ENCODE measurements at regions of chr1 and their contacts with region 1.

Region 1: DNA sequence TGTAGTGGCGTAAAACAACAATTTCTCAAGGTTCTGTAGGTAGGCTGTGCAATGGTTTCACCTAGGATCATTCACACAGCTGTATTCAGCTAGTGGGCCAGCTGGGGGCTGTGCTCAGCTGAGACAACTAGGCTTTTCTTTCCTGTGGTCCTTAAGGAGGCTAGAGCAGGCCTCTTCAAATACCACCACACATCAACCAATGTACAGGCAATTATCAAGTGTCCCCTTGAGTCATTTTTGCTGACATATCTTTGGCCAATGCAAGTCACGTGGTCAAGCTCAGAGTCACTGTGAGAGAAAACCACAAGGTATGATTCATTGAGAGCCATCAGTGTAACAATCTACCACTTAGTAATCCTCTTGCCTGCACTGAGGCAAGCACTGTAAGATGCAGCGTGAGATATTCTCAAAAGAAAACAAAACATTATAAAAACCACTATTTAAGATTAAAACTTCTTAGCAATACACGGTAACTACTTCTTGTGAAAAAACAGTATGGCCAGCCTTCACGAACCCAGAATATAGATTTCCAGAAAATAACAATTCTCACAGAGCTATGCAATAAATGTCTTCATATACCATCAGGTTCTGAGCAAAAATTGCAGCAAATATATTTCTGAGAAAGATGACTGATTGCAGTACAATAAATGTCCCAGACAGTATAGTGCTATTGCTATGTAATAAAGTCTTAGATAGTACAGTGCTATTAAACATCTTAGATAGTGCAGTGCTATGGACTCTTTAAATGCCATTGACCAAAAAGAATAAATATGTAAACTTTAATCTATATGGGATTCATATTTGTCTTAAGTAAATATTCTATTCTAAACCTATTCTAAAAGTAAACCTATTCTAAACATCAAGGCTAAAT is 55.3 kb downstream of the NME7 start:
- ATAC-seq: peak in 7 of 8 experiments; percentile 39 to 98 (median 85)
- H3K4me3 ChIP-seq: no peak overlapping the region
- H3K27ac ChIP-seq: no peak overlapping the region
- H3K4me1 ChIP-seq: peaks cover 4 to 12% of the 10 kb centered on the region in 2 donors

Region 2: GRCh38 chr1:168803806-168804510 is 508.4 kb before region 1 on chr1:
- in situ Hi-C with region 1: no loop called
- ATAC-seq: peak in 5 of 8 experiments; percentile 73 to 85 (median 83)
- H3K4me3 ChIP-seq: no peak overlapping the region
- H3K27ac ChIP-seq: no peak overlapping the region
- H3K4me1 ChIP-seq: peaks cover 9 to 11% of the 10 kb centered on the region in 2 donors

Region 3: DNA sequence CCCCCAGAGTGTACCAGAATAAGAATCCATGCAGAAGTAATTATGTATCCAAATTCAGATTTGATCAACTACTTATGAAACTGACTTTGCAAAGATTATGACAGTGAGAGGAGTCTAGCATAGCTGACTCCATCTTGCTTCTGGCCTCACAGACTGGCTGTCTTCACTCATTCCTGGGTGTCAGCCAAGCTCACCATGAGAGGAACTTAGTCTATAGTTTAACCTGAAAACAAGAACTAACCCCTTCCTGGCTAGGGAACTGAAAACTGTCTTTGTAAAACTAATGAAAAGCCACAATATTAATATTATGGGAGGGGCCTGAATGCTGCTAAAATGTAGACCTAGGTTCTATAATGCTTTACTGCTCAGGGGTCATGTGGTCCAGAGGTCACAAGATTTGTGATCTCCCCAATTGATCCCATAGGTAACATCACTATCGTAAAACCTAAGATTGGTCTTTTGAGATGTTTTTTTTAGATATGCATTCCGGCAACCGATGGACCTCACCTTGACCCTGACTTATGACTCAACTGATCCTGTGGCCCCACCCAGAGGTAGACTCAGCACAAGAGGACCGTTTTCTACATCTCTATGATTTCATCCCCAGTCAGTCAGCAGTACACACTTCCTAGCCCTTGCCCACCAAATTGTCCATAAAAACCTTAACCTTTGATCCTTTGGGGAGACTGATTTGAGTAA is 150.7 kb before region 1 on chr1:
- in situ Hi-C with region 1: no loop called
- ATAC-seq: no peak
- H3K4me3 ChIP-seq: no peak overlapping the region
- H3K27ac ChIP-seq: no peak overlapping the region
- H3K4me1 ChIP-seq: peaks cover 0 to 2% of the 10 kb centered on the region in 2 donors

Region 4: DNA sequence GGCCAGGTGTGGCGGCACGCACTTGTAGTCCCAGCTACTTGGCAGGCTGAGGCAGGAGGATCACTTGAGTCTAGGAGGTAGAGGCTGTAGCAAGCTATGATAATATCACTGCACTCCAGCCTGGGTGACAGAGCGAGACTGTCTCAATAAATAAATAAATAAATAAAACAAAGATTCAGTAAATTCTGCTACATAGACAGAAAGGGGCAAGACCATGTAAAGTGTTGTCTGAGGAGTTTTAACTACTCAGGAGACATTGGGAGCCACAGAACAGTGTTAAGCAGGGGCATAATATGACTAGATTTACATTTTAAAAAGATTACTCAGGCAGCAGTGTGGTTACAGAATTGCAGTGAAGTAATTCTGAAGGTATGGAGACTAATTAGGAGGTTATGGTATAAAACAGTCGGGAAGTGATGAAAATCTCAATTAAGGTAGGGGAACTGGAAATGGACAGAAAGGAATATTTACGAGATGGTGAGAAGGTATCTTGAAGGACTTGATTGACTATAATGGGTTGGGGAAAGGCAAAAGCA is 111.2 kb before region 1 on chr1:
- in situ Hi-C with region 1: loop called in 1 of 9 experiments (anchors 25 kb)
- ATAC-seq: no peak
- H3K4me3 ChIP-seq: no peak overlapping the region
- H3K27ac ChIP-seq: no peak overlapping the region
- H3K4me1 ChIP-seq: peaks cover 6 to 46% of the 10 kb centered on the region in 2 donors

Measured in motor neuron (in vitro differentiated cells).